Activated B cell treated with CpG ODN at 0.5 μM for 24 hours (primary cell): ENCODE measurements at regions of chr2 and their contacts with region 1.

Region 1: GRCh38 chr2:121736462-121737341 is at the start of gene NIFK:
- DNase-seq: peak; percentile 99
- ATAC-seq: peak; percentile 93
- H3K4me3 Mint-ChIP-seq: peak within 1 kb of the TSS; percentile 97
- H3K27ac Mint-ChIP-seq: peak within 1 kb of the TSS; percentile 97
- H3K4me1 Mint-ChIP-seq: peaks cover 20% of the 10 kb centered on the region
- H3K27me3 Mint-ChIP-seq: no peaks in the 10 kb centered on the region
- CTCF ChIP-seq: no peak
- total RNA-seq, gene NIFK: 86.4 and 102 TPM in 2 replicates

Region 2: DNA sequence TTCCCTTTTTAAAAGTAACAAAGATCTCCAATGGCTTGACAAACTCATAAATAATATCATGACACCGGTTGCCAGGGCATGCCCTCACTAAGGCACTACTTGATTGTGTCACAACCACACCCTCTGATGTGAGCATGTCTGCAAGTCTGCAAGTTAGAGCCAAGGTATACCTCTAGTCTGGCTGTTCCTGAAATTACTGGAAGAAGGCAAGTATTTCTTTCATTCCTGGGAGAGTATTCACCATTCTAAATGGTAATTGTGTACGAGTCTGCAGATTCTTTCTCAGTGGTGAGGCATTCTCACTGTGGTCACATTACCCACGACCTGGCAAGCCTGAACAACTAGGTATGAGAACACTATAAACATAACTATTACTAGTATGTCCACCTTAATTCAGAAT is 231.7 kb before region 1 on chr2:
- CTCF ChIA-PET with region 1: no interaction called
- POLR2A ChIA-PET with region 1: no interaction called
- intact Hi-C with region 1: no loop called
- DNase-seq: no peak
- ATAC-seq: no peak
- H3K4me3 Mint-ChIP-seq: no peak overlapping the region
- H3K27ac Mint-ChIP-seq: no peak overlapping the region
- H3K4me1 Mint-ChIP-seq: no peaks in the 10 kb centered on the region
- H3K27me3 Mint-ChIP-seq: no peaks in the 10 kb centered on the region
- CTCF ChIP-seq: no peak

Region 3: GRCh38 chr2:121561617-121562268 is 175.0 kb before region 1 on chr2:
- CTCF ChIA-PET with region 1: no interaction called
- POLR2A ChIA-PET with region 1: interaction called, 10 read pairs
- intact Hi-C with region 1: no loop called
- DNase-seq: no peak
- ATAC-seq: no peak
- H3K4me3 Mint-ChIP-seq: no peak overlapping the region
- H3K27ac Mint-ChIP-seq: no peak overlapping the region
- H3K4me1 Mint-ChIP-seq: peaks cover 15% of the 10 kb centered on the region
- H3K27me3 Mint-ChIP-seq: no peaks in the 10 kb centered on the region
- CTCF ChIP-seq: no peak

Region 4: GRCh38 chr2:121755236-121756111 is 18.8 kb after region 1 on chr2 and contains the start of gene TSN:
- CTCF ChIA-PET with region 1: no interaction called
- POLR2A ChIA-PET with region 1: interaction called, 23 read pairs
- intact Hi-C with region 1: loop called (anchors 1 kb)
- DNase-seq: peak; percentile 96
- ATAC-seq: peak; percentile 99
- H3K4me3 Mint-ChIP-seq: peak within 1 kb of the TSS; percentile 93
- H3K27ac Mint-ChIP-seq: peak within 1 kb of the TSS; percentile 80
- H3K4me1 Mint-ChIP-seq: peaks cover 34% of the 10 kb centered on the region
- H3K27me3 Mint-ChIP-seq: no peaks in the 10 kb centered on the region
- CTCF ChIP-seq: no peak
- total RNA-seq, gene TSN: 60.8 and 61.3 TPM in 2 replicates

Region 5: DNA sequence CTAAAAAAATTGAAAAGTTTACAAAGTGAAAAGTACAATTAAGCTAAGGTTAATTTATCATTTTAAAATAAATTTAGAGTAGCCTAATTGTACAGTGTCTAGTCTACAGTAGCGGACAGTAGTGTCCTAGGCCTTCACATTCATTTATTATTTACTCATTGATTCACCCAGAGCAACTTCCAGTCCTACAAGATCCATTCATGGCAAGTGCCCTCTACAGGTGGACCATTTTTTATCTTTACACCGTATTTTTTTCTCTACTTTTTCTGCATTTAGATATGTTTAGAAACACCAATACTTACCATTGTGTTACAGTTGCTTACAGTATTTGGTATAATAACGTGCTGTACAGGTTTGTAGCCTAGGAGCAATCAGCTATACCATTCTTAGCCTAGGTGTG is 102.9 kb after region 1 on chr2:
- CTCF ChIA-PET with region 1: no interaction called
- POLR2A ChIA-PET with region 1: no interaction called
- intact Hi-C with region 1: no loop called
- DNase-seq: no peak
- ATAC-seq: no peak
- H3K4me3 Mint-ChIP-seq: no peak overlapping the region
- H3K27ac Mint-ChIP-seq: no peak overlapping the region
- H3K4me1 Mint-ChIP-seq: no peaks in the 10 kb centered on the region
- H3K27me3 Mint-ChIP-seq: no peaks in the 10 kb centered on the region
- CTCF ChIP-seq: no peak